ENCODE measurements at regions of chr5 and their contacts with region 1.

Region 1: DNA sequence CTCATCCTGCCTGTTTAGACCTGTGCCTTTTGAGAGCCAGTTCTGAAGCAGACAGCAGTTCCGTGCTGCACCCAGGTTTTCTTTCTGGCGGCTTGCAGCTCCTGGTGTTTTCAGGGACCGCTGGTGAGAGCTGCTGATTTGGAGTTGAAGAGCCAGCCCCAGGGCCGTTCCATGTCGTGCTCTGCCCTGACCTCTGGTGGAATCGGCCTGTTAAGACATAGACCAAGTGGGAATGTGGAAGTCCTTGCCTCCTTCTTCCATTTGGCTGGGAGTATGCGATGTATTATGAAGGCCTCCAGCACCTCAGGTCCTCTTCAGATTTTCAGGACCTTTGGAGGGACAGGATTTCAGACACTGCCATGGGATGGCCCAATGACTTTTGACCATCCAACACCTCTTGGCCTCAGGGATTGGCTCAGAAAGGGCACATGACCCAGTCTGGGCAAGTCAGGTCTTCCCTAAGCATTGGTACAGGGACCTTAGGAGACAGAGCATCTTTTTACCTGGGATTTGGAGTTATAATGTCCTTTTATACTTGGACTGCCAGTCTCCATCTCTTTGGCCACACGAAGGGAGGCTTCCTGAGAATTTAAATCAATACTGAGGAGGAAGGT is 136.1 kb upstream of the CLINT1 start:
- DNase-seq: no peak
- H3K4me3 ChIP-seq: no peak overlapping the region
- CTCF ChIP-seq: peak; percentile 86

Region 2: DNA sequence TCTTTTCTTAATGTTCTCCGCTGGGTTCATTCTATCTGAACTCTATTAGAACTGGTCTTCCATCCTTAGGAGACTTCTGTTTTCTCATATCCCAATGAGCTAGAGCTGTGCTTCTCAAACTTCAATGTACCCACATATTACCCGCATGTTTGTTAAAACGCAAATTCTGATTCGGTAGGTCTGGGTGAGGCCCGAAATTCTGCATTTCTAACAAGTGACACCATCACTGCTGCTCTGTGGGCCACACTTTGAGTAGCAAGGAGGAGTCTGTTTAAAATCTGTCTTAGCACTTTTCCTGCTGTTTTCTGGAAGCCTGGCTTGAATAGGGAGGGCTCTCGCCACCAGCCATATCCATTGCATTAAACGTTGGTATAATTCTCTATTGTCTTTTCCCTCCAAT is 15.8 kb after region 1 on chr5:
- CTCF ChIA-PET with region 1: interaction called, 11 read pairs
- POLR2A ChIA-PET with region 1: no interaction called
- DNase-seq: no peak
- H3K4me3 ChIP-seq: no peak overlapping the region
- CTCF ChIP-seq: no peak

Region 3: GRCh38 chr5:158064334-158065123 is 69.5 kb after region 1 on chr5:
- CTCF ChIA-PET with region 1: no interaction called
- POLR2A ChIA-PET with region 1: no interaction called
- DNase-seq: no peak
- H3K4me3 ChIP-seq: no peak overlapping the region
- CTCF ChIP-seq: no peak